MCF 10A (cell line): ENCODE measurements at regions of chr2 and their contacts with region 1.

Region 1: GRCh38 chr2:158179660-158180059 is 78.0 kb downstream of the UPP2 start:
- DNase-seq: peak; percentile 26
- H3K4me3 Mint-ChIP-seq: no peak overlapping the region
- H3K27ac Mint-ChIP-seq: no peak overlapping the region
- H3K4me1 Mint-ChIP-seq: no peaks in the 10 kb centered on the region
- H3K27me3 Mint-ChIP-seq: peaks cover 19% of the 10 kb centered on the region
- CTCF ChIP-seq: peak; percentile 37

Region 2: DNA sequence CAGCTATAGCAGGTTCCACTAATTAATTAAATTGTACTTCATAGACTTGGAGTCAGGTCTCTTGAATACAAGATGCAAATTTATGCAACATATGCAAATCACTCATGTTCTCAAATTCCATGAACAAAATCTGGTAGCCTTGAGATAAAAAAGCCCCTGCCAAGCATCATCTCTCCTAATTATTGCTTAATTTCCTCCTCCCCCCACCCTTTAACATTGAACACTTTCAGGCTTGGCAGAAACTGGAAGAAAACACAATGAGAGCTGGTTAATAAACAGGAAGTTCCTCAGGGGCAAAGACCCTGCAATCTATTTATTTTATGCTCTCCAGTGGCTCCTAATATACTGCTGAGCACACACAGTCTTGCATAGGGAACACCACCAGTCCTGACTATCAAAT is 267.9 kb before region 1 on chr2:
- CTCF ChIA-PET with region 1: no interaction called
- POLR2A ChIA-PET with region 1: no interaction called
- intact Hi-C with region 1: no loop called
- DNase-seq: no peak
- H3K4me3 Mint-ChIP-seq: no peak overlapping the region
- H3K27ac Mint-ChIP-seq: no peak overlapping the region
- H3K4me1 Mint-ChIP-seq: no peaks in the 10 kb centered on the region
- H3K27me3 Mint-ChIP-seq: no peaks in the 10 kb centered on the region
- CTCF ChIP-seq: no peak

Region 3: DNA sequence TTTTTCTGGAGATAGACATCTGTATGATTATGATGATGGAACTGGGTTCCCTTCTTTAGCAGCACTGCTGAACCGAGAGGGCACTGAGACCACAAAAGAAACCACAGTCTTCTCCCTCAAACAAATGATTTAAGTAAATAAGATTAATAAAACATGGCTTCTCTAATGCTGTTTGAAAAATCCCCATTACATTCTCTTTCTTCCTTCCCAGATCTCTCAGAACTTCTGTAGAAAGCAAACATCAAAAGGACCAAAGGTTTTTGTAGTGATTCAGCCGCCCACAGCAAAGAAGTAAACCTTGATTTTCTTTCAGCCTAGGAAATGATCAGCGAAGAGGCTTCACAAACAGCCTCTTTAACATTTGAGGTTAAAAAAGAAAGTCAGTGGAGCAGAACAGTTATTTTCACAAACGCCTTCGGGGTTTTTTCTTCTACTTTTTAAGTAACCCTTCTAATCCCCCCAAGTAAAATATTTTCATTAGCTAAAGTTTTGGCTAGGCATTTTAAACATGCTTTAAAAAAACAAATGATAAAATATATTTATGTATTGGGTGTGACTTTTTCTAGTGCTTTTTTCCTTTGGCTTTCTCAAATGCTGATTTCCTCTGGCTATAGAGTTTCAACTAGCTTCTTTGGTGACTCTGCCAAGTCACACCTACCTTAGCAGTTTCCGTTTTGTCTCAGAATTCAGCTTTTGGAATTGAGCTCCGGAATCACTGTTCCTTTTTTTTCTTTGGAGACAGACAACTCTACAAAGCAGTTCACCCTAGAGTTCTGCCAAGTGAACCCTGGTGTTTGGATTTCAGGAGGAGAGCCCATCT is 11.6 kb after region 1 on chr2:
- CTCF ChIA-PET with region 1: interaction called, 17 read pairs
- POLR2A ChIA-PET with region 1: no interaction called
- intact Hi-C with region 1: no loop called
- DNase-seq: no peak
- H3K4me3 Mint-ChIP-seq: no peak overlapping the region
- H3K27ac Mint-ChIP-seq: no peak overlapping the region
- H3K4me1 Mint-ChIP-seq: no peaks in the 10 kb centered on the region
- H3K27me3 Mint-ChIP-seq: no peaks in the 10 kb centered on the region
- CTCF ChIP-seq: no peak

Region 4: GRCh38 chr2:158619496-158619895 is 439.8 kb after region 1 on chr2:
- CTCF ChIA-PET with region 1: interaction called, 14 read pairs
- POLR2A ChIA-PET with region 1: no interaction called
- intact Hi-C with region 1: loop called (anchors 5 kb)
- DNase-seq: peak; percentile 62
- H3K4me3 Mint-ChIP-seq: no peak overlapping the region
- H3K27ac Mint-ChIP-seq: peak overlapping the region; percentile 57
- H3K4me1 Mint-ChIP-seq: peaks cover 11% of the 10 kb centered on the region
- H3K27me3 Mint-ChIP-seq: no peaks in the 10 kb centered on the region
- CTCF ChIP-seq: no peak